ENCODE measurements at regions of chr7 and their contacts with region 1.

Region 1: GRCh38 chr7:131945313-131945911 is 389.0 kb upstream of the PODXL start:
- DNase-seq: peak; percentile 65 to 87
- ATAC-seq: peak; percentile 76
- H3K4me3 ChIP-seq: no peak overlapping the region
- H3K27ac ChIP-seq: no peak overlapping the region
- H3K4me1 ChIP-seq: peaks cover 2% of the 10 kb centered on the region in 2 donors
- H3K27me3 ChIP-seq: no peaks in the 10 kb centered on the region

Region 2: GRCh38 chr7:131355921-131356777 is 589.3 kb before region 1 on chr7:
- intact Hi-C with region 1: no loop called
- DNase-seq: no peak
- ATAC-seq: no peak
- H3K4me3 ChIP-seq: no peak overlapping the region
- H3K27ac ChIP-seq: no peak overlapping the region
- H3K4me1 ChIP-seq: no peaks in the 10 kb centered on the region
- H3K27me3 ChIP-seq: no peaks in the 10 kb centered on the region

Region 3: GRCh38 chr7:132145466-132145865 is 200.1 kb after region 1 on chr7:
- intact Hi-C with region 1: loop called (anchors 5 kb)
- DNase-seq: peak; percentile 81 to 82
- ATAC-seq: peak; percentile 90
- H3K4me3 ChIP-seq: no peak overlapping the region
- H3K27ac ChIP-seq: no peak overlapping the region
- H3K4me1 ChIP-seq: no peaks in the 10 kb centered on the region
- H3K27me3 ChIP-seq: no peaks in the 10 kb centered on the region

Region 4: GRCh38 chr7:132206594-132206993 is 261.2 kb after region 1 on chr7:
- intact Hi-C with region 1: no loop called
- DNase-seq: no peak
- ATAC-seq: no peak
- H3K4me3 ChIP-seq: no peak overlapping the region
- H3K27ac ChIP-seq: no peak overlapping the region
- H3K4me1 ChIP-seq: no peaks in the 10 kb centered on the region
- H3K27me3 ChIP-seq: no peaks in the 10 kb centered on the region

Region 5: GRCh38 chr7:132250883-132251653 is 305.7 kb after region 1 on chr7:
- intact Hi-C with region 1: loop called (anchors 5 to 10 kb)
- DNase-seq: peak; percentile 86 to 88
- ATAC-seq: peak; percentile 73
- H3K4me3 ChIP-seq: no peak overlapping the region
- H3K27ac ChIP-seq: no peak overlapping the region
- H3K4me1 ChIP-seq: peaks cover 2% of the 10 kb centered on the region in 2 donors
- H3K27me3 ChIP-seq: no peaks in the 10 kb centered on the region

Region 6: GRCh38 chr7:132318352-132319318 is 373.2 kb after region 1 on chr7:
- intact Hi-C with region 1: loop called (anchors 5 kb)
- DNase-seq: peak; percentile 87 to 96
- ATAC-seq: peak; percentile 92
- H3K4me3 ChIP-seq: no peak overlapping the region
- H3K27ac ChIP-seq: no peak overlapping the region
- H3K4me1 ChIP-seq: no peaks in the 10 kb centered on the region
- H3K27me3 ChIP-seq: no peaks in the 10 kb centered on the region

Region 7: GRCh38 chr7:132500727-132501440 is 555.5 kb after region 1 on chr7:
- intact Hi-C with region 1: loop called in 1 of 2 experiments (anchors 10 kb)
- DNase-seq: peak; percentile 86
- ATAC-seq: peak; percentile 81
- H3K4me3 ChIP-seq: no peak overlapping the region
- H3K27ac ChIP-seq: no peak overlapping the region
- H3K4me1 ChIP-seq: no peaks in the 10 kb centered on the region
- H3K27me3 ChIP-seq: no peaks in the 10 kb centered on the region

Measured in aorta (tissue), 5 donors.